Prostate gland (tissue), 2 donors: ENCODE measurements at regions of chr7 and their contacts with region 1.

Region 1: DNA sequence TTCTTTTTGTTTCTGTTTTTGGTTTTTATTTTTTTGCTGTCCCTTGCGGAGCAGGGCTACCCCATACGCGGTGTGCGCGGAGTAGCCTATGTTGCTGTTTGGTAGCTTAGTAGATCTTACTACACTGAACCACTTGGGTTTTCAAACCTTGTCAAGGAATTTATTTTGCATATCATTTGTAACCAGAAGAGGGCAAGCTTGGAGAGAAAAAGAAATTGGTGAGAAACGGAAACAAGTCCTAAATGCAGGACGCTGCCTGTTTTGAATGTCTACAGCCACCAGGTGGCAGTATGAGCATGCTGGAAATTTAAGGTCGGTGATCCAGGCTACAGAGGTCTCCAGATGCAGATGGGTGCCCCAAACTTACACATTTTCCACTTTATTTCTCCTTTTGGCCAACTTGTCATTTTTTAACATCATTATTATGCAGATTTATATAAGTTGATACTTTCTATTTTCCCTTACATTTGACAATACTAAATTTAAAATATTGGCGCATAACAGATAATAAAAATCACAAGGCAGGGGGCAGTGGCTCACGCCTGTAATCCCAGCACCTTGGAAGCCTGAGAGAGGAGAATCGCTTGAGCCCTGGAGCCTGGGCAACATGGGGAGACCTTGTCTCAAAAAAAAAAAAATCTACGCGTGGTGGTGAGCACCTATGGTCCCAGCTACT is 15.3 kb upstream of the TRA2A start:
- DNase-seq: peak; percentile 76
- H3K4me3 ChIP-seq: no peak overlapping the region
- H3K27ac ChIP-seq: no peak overlapping the region
- H3K4me1 ChIP-seq: no peaks in the 10 kb centered on the region
- H3K27me3 ChIP-seq: no peaks in the 10 kb centered on the region
- CTCF ChIP-seq: peak; percentile 82 to 92 (median 90)
- POLR2A ChIP-seq: no peak

Region 2: GRCh38 chr7:23273141-23273599 is 273.9 kb before region 1 on chr7:
- intact Hi-C with region 1: loop called (anchors 10 kb)
- DNase-seq: peak; percentile 86
- H3K4me3 ChIP-seq: no peak overlapping the region
- H3K27ac ChIP-seq: no peak overlapping the region
- H3K4me1 ChIP-seq: no peaks in the 10 kb centered on the region
- H3K27me3 ChIP-seq: no peaks in the 10 kb centered on the region
- CTCF ChIP-seq: peak; percentile 28 to 77 (median 66)
- POLR2A ChIP-seq: no peak

Region 3: GRCh38 chr7:23462846-23463245 is 84.2 kb before region 1 on chr7:
- intact Hi-C with region 1: no loop called
- DNase-seq: no peak
- H3K4me3 ChIP-seq: no peak overlapping the region
- H3K27ac ChIP-seq: no peak overlapping the region
- H3K4me1 ChIP-seq: no peaks in the 10 kb centered on the region
- H3K27me3 ChIP-seq: peaks cover 19% of the 10 kb centered on the region
- CTCF ChIP-seq: peak in 1 of 4 experiments; percentile 34
- POLR2A ChIP-seq: no peak

Region 4: DNA sequence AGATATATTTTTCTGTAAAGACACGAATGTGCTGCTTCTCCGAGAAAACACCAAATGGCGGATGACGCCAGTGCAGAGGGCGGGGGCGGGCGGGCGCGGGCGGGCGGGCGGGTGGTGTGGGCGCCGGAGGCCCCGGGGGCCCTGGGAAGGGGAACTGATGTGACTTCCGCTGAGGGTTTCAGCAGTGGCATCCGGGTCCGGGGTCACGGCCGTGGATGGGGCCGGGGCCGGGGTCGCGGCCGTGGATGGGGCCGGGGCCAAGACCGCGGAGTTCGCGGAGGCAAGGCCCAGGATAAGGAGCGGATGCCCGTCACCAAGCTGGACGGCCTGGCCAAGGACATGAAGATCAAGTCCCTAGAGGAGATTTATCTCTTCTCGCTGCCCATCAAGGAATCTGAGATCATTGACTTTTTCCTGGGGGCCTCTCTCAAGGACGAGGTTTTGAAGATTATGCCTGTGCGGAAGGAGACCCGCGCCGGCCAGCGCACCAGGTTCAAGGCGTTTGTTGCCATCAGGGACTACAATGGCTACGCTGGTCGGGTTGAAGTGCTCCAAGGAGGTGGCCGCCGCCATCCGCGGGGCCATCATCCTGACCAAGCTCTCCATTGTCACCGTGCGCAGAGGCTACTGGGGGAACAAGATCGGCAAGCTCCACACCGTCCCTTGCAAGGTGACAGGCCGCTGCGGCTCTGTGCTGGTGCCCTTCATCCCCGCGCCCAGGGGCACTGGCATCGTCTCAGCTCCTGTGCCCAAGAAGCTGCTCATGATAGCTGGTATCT is 56.5 kb before region 1 on chr7:
- intact Hi-C with region 1: no loop called
- DNase-seq: no peak
- H3K4me3 ChIP-seq: peak overlapping the region; percentile 28 to 37
- H3K27ac ChIP-seq: no peak overlapping the region
- H3K4me1 ChIP-seq: no peaks in the 10 kb centered on the region
- H3K27me3 ChIP-seq: no peaks in the 10 kb centered on the region
- CTCF ChIP-seq: no peak
- POLR2A ChIP-seq: no peak

Region 5: GRCh38 chr7:23520582-23520981 is 26.5 kb before region 1 on chr7:
- intact Hi-C with region 1: no loop called
- DNase-seq: no peak
- H3K4me3 ChIP-seq: no peak overlapping the region
- H3K27ac ChIP-seq: no peak overlapping the region
- H3K4me1 ChIP-seq: no peaks in the 10 kb centered on the region
- H3K27me3 ChIP-seq: no peaks in the 10 kb centered on the region
- CTCF ChIP-seq: no peak
- POLR2A ChIP-seq: no peak

Region 6: DNA sequence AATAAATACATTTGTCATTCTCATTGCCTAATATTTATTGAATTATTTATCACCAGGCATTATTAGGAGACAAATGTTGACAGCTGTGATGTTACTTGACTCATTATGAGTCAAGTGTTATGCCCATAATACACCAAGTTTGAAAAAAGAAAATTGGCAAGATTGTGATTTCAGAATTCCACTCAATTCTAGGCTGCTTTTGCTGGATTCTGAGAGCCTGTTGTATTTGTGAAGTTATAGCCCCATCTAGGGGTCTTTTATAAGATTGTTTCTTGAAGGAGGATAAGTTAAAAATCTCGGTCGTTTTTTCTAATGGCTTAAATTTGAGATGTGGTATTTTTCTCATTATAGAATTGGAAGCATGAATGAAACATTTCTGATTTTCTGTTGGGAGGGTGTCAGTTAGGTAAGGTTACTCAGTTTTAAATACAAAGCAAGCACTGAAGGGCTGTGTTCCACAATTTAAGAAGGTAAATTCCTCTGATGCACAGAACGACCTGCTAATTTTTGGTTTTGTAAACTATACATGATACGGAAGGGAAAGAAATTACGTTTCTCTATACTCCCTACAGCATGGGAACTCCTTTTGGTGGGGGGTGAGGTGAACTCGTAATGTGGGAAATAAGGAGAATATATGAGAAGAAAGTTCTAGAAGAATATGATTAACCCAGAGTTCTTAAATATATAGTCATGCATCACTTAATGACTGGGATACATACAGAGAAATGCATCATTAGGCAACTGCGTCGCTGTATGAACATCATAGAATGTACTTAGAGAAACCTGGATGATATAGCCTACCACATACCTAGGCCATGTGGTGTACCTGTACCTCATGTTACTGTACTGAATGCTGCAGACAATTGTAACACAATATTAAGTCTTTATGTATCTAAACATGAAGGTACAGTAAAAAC is 165.6 kb after region 1 on chr7:
- intact Hi-C with region 1: loop called (anchors 5 kb)
- DNase-seq: no peak
- H3K4me3 ChIP-seq: no peak overlapping the region
- H3K27ac ChIP-seq: no peak overlapping the region
- H3K4me1 ChIP-seq: no peaks in the 10 kb centered on the region
- H3K27me3 ChIP-seq: no peaks in the 10 kb centered on the region
- CTCF ChIP-seq: peak in 3 of 4 experiments; percentile 64 to 70 (median 64)
- POLR2A ChIP-seq: no peak